GM23248 (cell line): ENCODE measurements at regions of chr1 and their contacts with region 1.

Region 1: DNA sequence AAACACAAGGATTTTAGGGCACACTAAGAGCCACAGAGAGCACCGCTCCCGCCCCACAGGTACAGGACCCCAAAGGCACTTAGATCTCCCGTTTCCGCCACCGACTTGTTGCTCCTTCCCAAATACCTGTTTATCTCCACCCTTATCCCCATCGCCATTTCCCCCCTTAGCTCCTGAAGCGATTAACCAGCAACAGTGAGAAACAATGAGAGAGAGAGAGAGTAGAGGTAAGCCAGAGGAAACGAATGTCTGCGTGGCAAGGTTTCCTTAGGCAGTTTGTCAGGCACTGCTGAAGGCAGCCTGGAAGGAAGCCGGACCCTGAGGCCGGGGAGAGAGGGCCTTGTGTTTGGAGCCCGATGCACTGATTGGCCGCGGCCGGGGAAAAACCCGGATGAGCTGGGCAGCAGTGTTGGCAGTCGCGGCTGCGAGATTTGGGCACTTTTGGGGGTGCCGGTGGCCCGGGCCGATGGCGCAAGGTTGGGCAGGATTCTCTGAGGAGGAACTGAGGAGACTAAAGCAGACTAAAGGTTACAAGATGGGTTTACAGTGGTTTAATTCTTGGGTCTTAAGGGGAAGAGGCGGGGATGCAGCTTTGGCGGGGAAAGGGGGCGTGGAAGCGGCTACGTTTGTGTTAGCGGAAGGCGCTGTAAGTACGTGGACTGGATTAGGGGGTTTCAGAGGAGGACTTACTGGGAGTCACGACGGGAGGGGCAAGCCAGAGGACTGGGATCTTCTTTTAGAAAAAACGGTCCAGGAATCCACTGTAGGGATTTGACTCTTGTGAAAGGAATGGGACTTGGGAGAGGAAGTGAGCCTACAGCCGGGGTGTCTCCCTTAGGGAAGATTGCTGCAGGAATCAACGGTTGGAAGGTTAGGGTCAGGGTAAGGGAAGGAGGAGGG is at the start of gene GORAB:
- DNase-seq: peak; percentile 97
- H3K4me3 ChIP-seq: peak within 1 kb of the TSS; percentile 96
- H3K27ac ChIP-seq: peak within 1 kb of the TSS; percentile 100
- H3K4me1 ChIP-seq: peaks cover 19% of the 10 kb centered on the region
- H3K27me3 ChIP-seq: no peaks in the 10 kb centered on the region
- total RNA-seq, gene GORAB: 16.4 and 27.7 TPM in 2 replicates

Region 2: DNA sequence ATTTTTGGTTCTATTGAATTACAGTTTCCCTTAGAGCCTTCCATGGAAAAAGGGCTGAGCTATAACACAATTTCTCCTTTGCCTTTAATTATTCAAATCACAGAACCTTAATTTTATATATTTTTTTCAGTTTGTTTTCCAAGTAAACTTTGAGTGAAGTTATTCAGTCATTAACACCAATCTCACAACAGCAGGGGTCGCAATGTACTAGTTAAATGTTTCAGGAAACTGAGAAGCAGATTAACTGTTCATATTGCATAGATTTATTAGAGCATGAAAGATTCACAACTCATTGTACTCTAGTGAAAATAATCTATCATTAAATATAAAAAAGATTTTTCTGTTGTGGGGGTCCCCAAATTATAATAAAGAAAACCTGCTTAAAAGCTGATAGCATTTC is 521.6 kb before region 1 on chr1:
- in situ Hi-C with region 1: loop called (anchors 25 kb)
- DNase-seq: peak; percentile 79
- H3K4me3 ChIP-seq: no peak overlapping the region
- H3K27ac ChIP-seq: no peak overlapping the region
- H3K4me1 ChIP-seq: no peaks in the 10 kb centered on the region
- H3K27me3 ChIP-seq: no peaks in the 10 kb centered on the region

Region 3: GRCh38 chr1:170729225-170730002 is 197.4 kb after region 1 on chr1:
- in situ Hi-C with region 1: no loop called
- DNase-seq: peak; percentile 69
- H3K4me3 ChIP-seq: no peak overlapping the region
- H3K27ac ChIP-seq: peak overlapping the region; percentile 56
- H3K4me1 ChIP-seq: peaks cover 34% of the 10 kb centered on the region
- H3K27me3 ChIP-seq: no peaks in the 10 kb centered on the region